CD4-positive, alpha-beta T cell (primary cell): ENCODE measurements at regions of chr4 and their contacts with region 1.

Region 1: GRCh38 chr4:87973283-87974169 is 2.0 kb upstream of the SPP1 start:
- DNase-seq: peak in 9 of 14 experiments; percentile 2 to 52 (median 17)
- ATAC-seq: peak; percentile 68
- H3K4me3 ChIP-seq: no peak overlapping the region
- H3K4me3 Mint-ChIP-seq: no peak overlapping the region
- H3K27ac ChIP-seq: no peak overlapping the region
- H3K27ac Mint-ChIP-seq: no peak overlapping the region
- H3K4me1 ChIP-seq: peaks cover 5% of the 10 kb centered on the region
- H3K4me1 Mint-ChIP-seq: peaks cover 16% of the 10 kb centered on the region
- H3K27me3 ChIP-seq: peaks cover 6 to 49% of the 10 kb centered on the region in 2 experiments
- H3K27me3 Mint-ChIP-seq: peaks cover 70% of the 10 kb centered on the region
- CTCF ChIP-seq: peak; percentile 80

Region 2: DNA sequence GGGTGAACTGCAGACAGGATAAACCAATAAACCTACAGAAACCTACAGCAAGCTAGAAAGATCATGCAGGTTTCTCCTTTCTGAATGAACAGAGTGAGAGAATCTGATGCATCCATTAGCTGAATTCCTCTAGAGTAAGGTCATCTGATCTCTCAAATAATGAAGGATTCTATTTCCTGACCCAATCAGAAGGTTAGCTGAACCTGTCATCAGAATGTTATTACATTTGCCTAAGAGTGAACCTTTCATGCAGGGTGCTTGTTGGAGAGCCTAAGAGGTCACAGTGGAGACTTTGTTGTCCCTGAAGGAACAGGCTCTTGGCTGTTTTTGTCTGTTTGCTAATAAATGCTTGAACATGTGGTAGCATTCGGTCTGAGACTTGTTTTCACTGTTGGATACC is 116.7 kb before region 1 on chr4:
- CTCF ChIA-PET with region 1: no interaction called
- POLR2A ChIA-PET with region 1: no interaction called
- intact Hi-C with region 1: loop called in 1 of 2 experiments (anchors 5 kb)
- DNase-seq: no peak
- ATAC-seq: no peak
- H3K4me3 ChIP-seq: no peak overlapping the region
- H3K4me3 Mint-ChIP-seq: no peak overlapping the region
- H3K27ac ChIP-seq: no peak overlapping the region
- H3K27ac Mint-ChIP-seq: no peak overlapping the region
- H3K4me1 ChIP-seq: no peaks in the 10 kb centered on the region
- H3K4me1 Mint-ChIP-seq: no peaks in the 10 kb centered on the region
- H3K27me3 ChIP-seq: peaks cover 0 to 4% of the 10 kb centered on the region in 2 experiments
- H3K27me3 Mint-ChIP-seq: peaks cover 22% of the 10 kb centered on the region
- CTCF ChIP-seq: no peak

Region 3: GRCh38 chr4:87961993-87962392 is 11.5 kb before region 1 on chr4:
- CTCF ChIA-PET with region 1: interaction called, 10 read pairs
- POLR2A ChIA-PET with region 1: interaction called, 3 read pairs
- intact Hi-C with region 1: no loop called
- DNase-seq: no peak
- ATAC-seq: no peak
- H3K4me3 ChIP-seq: no peak overlapping the region
- H3K4me3 Mint-ChIP-seq: no peak overlapping the region
- H3K27ac ChIP-seq: no peak overlapping the region
- H3K27ac Mint-ChIP-seq: no peak overlapping the region
- H3K4me1 ChIP-seq: no peaks in the 10 kb centered on the region
- H3K4me1 Mint-ChIP-seq: no peaks in the 10 kb centered on the region
- H3K27me3 ChIP-seq: peaks cover 0 to 2% of the 10 kb centered on the region in 2 experiments
- H3K27me3 Mint-ChIP-seq: peaks cover 3% of the 10 kb centered on the region
- CTCF ChIP-seq: no peak